Activated CD4-positive, alpha-beta memory T cell treated with anti-CD3 and anti-CD28 coated beads, Interleukin-2, amount 10 ng/mL, durations not matched to agents 7 days and 5 days (primary cell): ENCODE measurements at regions of chr2 and their contacts with region 1.

Region 1: DNA sequence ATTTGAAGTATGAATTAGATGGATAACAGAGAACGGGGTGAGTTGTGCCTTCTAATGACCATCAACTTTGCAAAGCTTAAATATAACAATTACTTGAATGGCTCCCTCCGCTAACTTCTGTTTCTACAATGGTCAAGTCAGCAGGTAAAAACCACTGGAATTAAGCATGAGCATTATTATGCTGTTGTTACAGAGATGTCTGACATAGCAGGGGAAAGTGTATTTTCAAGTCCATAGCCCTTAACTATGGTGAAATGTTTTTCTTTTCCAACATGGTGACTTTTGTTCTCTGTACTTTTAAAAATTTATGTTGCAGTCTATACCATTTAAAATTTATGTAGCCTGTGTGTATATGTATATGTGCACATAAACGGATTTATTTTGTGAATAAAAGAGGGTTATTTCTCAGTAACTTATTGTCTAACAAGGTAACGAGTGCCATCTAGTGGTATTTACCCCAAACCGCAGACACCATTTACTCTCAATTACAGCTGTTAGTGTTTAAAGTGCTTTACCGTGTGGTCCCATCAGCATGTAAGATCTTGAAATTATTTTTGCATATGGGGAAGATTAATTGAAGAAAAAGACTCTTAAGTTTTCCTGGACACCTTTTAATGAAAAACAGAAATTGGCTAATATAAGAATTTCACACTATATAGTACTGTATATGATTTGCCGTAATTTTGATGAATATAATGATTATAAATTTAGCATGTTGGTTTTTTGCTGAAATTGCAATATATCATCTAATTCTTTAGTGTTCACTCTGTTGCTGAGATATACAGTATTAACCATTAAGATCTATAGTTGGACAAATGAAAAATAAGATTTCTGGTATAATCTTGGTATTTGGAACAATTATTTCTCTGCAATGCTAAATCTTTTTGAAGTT is 78.2 kb downstream of the UBE2E3 start:
- DNase-seq: peak; percentile 26
- H3K4me3 Mint-ChIP-seq: no peak overlapping the region
- H3K27ac Mint-ChIP-seq: no peak overlapping the region
- H3K4me1 Mint-ChIP-seq: peaks cover 3% of the 10 kb centered on the region
- H3K27me3 Mint-ChIP-seq: no peaks in the 10 kb centered on the region

Region 2: DNA sequence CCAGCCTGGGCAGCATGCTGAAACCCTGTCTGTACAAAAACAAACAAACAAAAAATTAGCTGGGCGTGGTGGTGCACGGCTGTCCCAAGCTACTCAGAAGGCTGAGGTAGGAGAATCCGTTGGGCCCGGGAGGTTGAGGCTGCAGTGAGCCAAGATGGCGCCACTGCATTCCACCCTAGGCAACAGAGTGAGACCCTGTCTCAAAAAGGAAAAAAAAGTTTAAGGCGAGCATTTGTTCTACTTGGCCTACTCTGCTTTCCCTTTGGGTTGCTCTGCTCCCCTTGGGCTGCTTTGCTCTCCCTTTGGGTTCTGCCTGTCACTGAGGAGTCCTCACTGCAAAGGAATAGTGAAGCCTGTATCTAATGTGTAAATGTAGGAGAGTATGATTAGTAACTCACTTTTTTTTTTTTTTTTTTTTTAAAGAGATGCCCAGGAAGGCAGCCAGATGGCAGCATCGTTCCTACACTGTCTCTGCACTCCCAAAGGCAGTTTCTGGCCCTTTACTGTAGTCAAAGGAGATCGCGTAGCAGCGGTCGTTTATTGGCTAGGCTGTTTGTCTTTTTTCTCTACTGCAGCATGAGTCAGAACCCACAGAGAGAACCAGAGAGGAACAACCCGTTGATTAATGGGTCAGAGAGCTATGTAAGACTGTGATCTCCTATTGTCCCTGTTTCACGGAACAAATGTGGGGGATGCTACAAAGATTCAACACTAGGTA is 933.2 kb before region 1 on chr2:
- CTCF ChIA-PET with region 1: interaction called, 20 read pairs
- POLR2A ChIA-PET with region 1: no interaction called
- DNase-seq: peak; percentile 36
- H3K4me3 Mint-ChIP-seq: no peak overlapping the region
- H3K27ac Mint-ChIP-seq: no peak overlapping the region
- H3K4me1 Mint-ChIP-seq: peaks cover 1% of the 10 kb centered on the region
- H3K27me3 Mint-ChIP-seq: peaks cover 13% of the 10 kb centered on the region

Region 3: DNA sequence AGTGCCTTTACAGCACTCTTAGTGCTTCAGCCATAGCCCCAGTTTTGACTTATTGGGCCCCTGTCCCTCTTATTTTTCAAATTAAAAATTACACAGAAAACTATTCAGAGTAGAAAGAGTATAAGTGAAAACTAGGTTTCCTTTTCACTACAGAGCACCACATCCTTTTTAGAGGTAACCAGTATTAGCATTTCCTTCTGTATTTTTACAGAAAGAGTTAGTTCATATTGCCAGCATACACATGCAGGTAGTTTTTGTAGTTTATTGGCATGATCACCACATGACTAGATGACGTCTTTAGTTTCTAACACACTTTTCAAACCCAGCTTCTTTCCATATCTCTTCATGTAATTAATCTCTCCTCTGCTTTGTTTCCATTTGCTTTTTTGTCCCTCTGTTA is 11.8 kb before region 1 on chr2:
- CTCF ChIA-PET with region 1: interaction called, 18 read pairs
- POLR2A ChIA-PET with region 1: no interaction called
- DNase-seq: no peak
- H3K4me3 Mint-ChIP-seq: no peak overlapping the region
- H3K27ac Mint-ChIP-seq: no peak overlapping the region
- H3K4me1 Mint-ChIP-seq: no peaks in the 10 kb centered on the region
- H3K27me3 Mint-ChIP-seq: no peaks in the 10 kb centered on the region